GM12878 (cell line): ENCODE measurements at regions of chr13 and their contacts with region 1.

Region 1: GRCh38 chr13:51562011-51562671 is 22.1 kb upstream of the WDFY2 start:
- DNase-seq: peak; percentile 70
- ATAC-seq: peak; percentile 94
- H3K4me3 ChIP-seq: no peak overlapping the region
- H3K27ac ChIP-seq: peak overlapping the region; percentile 55
- H3K4me1 ChIP-seq: peaks cover 31% of the 10 kb centered on the region
- H3K27me3 ChIP-seq: no peaks in the 10 kb centered on the region
- CTCF ChIP-seq: no peak
- EP300 ChIP-seq: no peak
- POLR2A ChIP-seq: no peak
- RAD21 ChIP-seq: no peak

Region 2: DNA sequence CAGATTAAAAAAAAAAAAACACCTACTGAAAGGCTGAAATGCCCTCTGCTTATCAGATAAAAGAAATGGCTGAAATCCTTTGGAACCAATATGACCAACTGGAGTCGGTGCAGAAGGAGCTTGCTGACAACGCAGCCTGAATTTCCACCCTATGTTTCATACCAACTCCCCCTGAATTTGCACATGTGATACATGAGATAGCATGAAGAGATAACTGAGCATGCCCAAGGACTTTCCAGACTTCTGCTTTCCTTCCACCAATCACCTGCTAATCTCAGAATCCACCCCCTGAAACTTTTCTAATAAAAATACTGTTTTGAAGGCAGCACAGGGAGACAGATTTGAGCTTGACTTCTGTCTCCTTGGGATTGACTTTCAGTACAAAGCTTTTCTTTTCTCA is 10.1 kb before region 1 on chr13:
- CTCF ChIA-PET with region 1: interaction called, 3 read pairs
- POLR2A ChIA-PET with region 1: interaction called, 6 read pairs
- RAD21 ChIA-PET with region 1: interaction called, 7 read pairs
- SMC1A ChIA-PET with region 1: interaction called, 27 read pairs
- in situ Hi-C with region 1: no loop called
- intact Hi-C with region 1: no loop called
- DNase-seq: no peak
- ATAC-seq: peak; percentile 73
- H3K4me3 ChIP-seq: no peak overlapping the region
- H3K27ac ChIP-seq: no peak overlapping the region
- H3K4me1 ChIP-seq: peaks cover 3% of the 10 kb centered on the region; the same call in 1 of the 2 replicates
- H3K27me3 ChIP-seq: no peaks in the 10 kb centered on the region
- CTCF ChIP-seq: no peak
- EP300 ChIP-seq: no peak
- POLR2A ChIP-seq: no peak
- RAD21 ChIP-seq: no peak